Activated CD8-positive, alpha-beta T cell treated with anti-CD3 and anti-CD28 coated beads for 36 hours (primary cell): ENCODE measurements at regions of chr6 and their contacts with region 1.

Region 1: GRCh38 chr6:30396833-30397479 is 52.0 kb downstream of the RPP21 start:
- DNase-seq: peak; percentile 92
- ATAC-seq: peak; percentile 99
- H3K4me3 Mint-ChIP-seq: no peak overlapping the region
- H3K27ac Mint-ChIP-seq: no peak overlapping the region
- H3K4me1 Mint-ChIP-seq: peaks cover 4% of the 10 kb centered on the region
- H3K27me3 Mint-ChIP-seq: peaks cover 20% of the 10 kb centered on the region
- CTCF ChIP-seq: peak; percentile 95

Region 2: DNA sequence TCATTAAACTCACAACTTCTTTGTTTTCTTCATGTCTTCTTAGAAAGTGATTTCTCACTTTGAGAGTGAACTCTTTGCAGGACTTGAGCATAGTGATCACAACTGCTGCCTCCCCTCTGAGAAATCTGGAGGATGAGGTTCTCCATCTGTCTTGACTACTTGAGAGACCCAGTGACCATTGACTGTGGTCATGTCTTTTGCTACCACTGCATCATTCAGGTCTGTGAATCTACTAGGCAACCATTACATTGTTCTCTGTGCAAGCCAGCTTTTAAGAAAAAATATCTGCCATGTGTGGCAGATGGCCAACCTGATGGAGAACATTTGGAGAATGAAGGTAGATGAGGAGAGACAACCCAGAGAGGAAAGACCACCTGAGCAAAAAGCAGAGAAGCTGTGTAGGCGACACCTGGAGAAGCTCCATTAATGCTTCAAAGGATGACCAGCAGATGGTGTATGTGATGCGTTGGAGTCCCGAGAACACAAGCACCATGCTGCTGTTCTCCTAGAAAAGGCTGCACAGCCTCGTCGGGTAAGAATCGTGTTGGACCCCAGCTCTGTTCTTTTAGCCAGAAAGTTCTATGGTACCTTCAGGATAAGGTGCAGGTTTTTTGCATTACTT is 158.7 kb before region 1 on chr6:
- CTCF ChIA-PET with region 1: interaction called, 33 read pairs
- POLR2A ChIA-PET with region 1: no interaction called
- intact Hi-C with region 1: no loop called
- DNase-seq: peak; percentile 39
- ATAC-seq: peak; percentile 70
- H3K4me3 Mint-ChIP-seq: no peak overlapping the region
- H3K27ac Mint-ChIP-seq: no peak overlapping the region
- H3K4me1 Mint-ChIP-seq: no peaks in the 10 kb centered on the region
- H3K27me3 Mint-ChIP-seq: peaks cover 20% of the 10 kb centered on the region
- CTCF ChIP-seq: peak; percentile 44

Region 3: GRCh38 chr6:30357678-30358540 is 39.0 kb before region 1 on chr6:
- CTCF ChIA-PET with region 1: interaction called, 22 read pairs
- POLR2A ChIA-PET with region 1: interaction called, 5 read pairs
- intact Hi-C with region 1: loop called (anchors 2 kb)
- DNase-seq: peak; percentile 74
- ATAC-seq: peak; percentile 88
- H3K4me3 Mint-ChIP-seq: peak overlapping the region; percentile 75
- H3K27ac Mint-ChIP-seq: no peak overlapping the region
- H3K4me1 Mint-ChIP-seq: peaks cover 1% of the 10 kb centered on the region
- H3K27me3 Mint-ChIP-seq: peaks cover 41% of the 10 kb centered on the region
- CTCF ChIP-seq: peak; percentile 87

Region 4: GRCh38 chr6:30411515-30412207 is 14.7 kb after region 1 on chr6:
- CTCF ChIA-PET with region 1: interaction called, 12 read pairs
- POLR2A ChIA-PET with region 1: no interaction called
- intact Hi-C with region 1: no loop called
- DNase-seq: peak; percentile 75
- ATAC-seq: peak; percentile 81
- H3K4me3 Mint-ChIP-seq: no peak overlapping the region
- H3K27ac Mint-ChIP-seq: no peak overlapping the region
- H3K4me1 Mint-ChIP-seq: peaks cover 6% of the 10 kb centered on the region
- H3K27me3 Mint-ChIP-seq: peaks cover 51% of the 10 kb centered on the region
- CTCF ChIP-seq: peak; percentile 79